ENCODE measurements at regions of chr7 and their contacts with region 1.

Region 1: GRCh38 chr7:150404805-150405583 is 25.9 kb downstream of the ZNF775 start:
- DNase-seq: peak; percentile 87
- ATAC-seq: peak; percentile 79
- H3K4me3 Mint-ChIP-seq: peak overlapping the region; percentile 97
- H3K27ac Mint-ChIP-seq: peak overlapping the region; percentile 94
- H3K4me1 Mint-ChIP-seq: peaks cover 36% of the 10 kb centered on the region
- H3K27me3 Mint-ChIP-seq: no peaks in the 10 kb centered on the region

Region 2: DNA sequence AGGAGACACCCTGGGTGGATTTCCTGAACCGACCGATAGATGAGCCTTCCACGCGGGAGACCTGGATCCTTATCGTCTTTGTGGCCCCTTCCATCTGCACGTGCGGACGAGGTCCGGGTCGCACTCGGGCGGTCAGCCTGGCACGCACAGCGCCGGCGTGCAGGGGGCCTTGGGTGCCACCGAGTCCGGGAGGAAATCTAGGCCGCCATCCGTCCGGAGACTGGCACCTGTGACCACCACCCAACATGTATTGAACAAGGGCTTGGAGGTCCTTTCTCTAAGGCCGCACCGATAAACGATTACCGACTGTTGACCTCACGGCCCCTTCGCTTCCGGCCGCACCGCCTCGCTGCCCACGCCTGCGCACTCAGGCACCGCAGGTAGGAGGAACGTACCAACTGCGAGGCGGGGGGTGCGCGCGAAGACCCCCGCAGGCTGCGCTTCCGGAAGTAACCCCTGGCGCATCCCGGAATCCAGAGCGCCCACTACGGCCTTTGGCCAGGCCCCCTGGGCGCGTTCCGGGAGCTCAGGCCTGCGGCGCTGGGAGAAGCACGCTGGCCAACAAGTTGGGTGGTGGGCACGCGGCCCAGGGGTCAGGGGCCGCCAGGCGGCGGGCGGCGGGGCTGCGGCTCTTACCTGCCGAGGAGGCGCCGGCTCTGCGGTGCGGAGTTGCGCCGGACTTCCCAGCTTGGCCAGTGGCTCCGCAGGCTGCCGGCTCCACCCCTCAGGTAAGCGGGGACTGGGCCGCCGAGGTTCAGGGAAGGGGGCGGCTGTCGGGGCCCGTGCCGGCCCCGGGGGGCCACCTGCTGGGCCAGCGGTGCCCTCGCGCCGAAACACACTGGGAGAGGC is 81.9 kb before region 1 on chr7 and contains the starts of genes ACTR3C and LRRC61:
- CTCF ChIA-PET with region 1: interaction called, 10 read pairs
- DNase-seq: peak; percentile 80
- ATAC-seq: peak; percentile 65
- H3K4me3 Mint-ChIP-seq: peak within 1 kb of the TSS; percentile 80
- H3K27ac Mint-ChIP-seq: peak within 1 kb of the TSS; percentile 100
- H3K4me1 Mint-ChIP-seq: peaks cover 48% of the 10 kb centered on the region
- H3K27me3 Mint-ChIP-seq: no peaks in the 10 kb centered on the region
- total RNA-seq, gene ACTR3C: 4.0 to 4.8 TPM
- total RNA-seq, gene LRRC61: 24.7 to 25.3 TPM

Region 3: GRCh38 chr7:150356265-150356897 is 48.6 kb before region 1 on chr7:
- CTCF ChIA-PET with region 1: interaction called, 47 read pairs
- DNase-seq: no peak
- ATAC-seq: peak; percentile 34
- H3K4me3 Mint-ChIP-seq: no peak overlapping the region
- H3K27ac Mint-ChIP-seq: no peak overlapping the region
- H3K4me1 Mint-ChIP-seq: peaks cover 43% of the 10 kb centered on the region
- H3K27me3 Mint-ChIP-seq: peaks cover 6% of the 10 kb centered on the region

Measured in activated CD8-positive, alpha-beta memory T cell treated with anti-CD3 and anti-CD28 coated beads, Interleukin-2, amount 10 ng/mL, durations not matched to agents 7 days and 5 days (primary cell).